Transverse colon (tissue), 4 donors: ENCODE measurements at regions of chr1 and their contacts with region 1.

Region 1: GRCh38 chr1:234610348-234611152 is 572 bp upstream of the IRF2BP2 start:
- DNase-seq: peak; percentile 96
- H3K4me3 ChIP-seq: peak overlapping the region; percentile 33 to 71 (median 47)
- H3K27ac ChIP-seq: peak overlapping the region; percentile 97 to 100 (median 100)
- H3K4me1 ChIP-seq: peaks cover 29 to 40% (median 34%) of the 10 kb centered on the region in 4 donors
- H3K27me3 ChIP-seq: no peaks in the 10 kb centered on the region
- CTCF ChIP-seq: peak in 2 of 5 experiments; percentile 2 to 13
- EP300 ChIP-seq: peak; percentile 59
- POLR2A ChIP-seq: peak; percentile 89

Region 2: GRCh38 chr1:234499119-234499942 is 111.2 kb before region 1 on chr1:
- in situ Hi-C with region 1: no loop called
- intact Hi-C with region 1: loop called (anchors 5 kb)
- DNase-seq: peak; percentile 93
- H3K4me3 ChIP-seq: peak overlapping the region in 1 of 4 donors; percentile 21
- H3K27ac ChIP-seq: peak overlapping the region; percentile 84 to 87 (median 86)
- H3K4me1 ChIP-seq: peaks cover 8 to 25% (median 18%) of the 10 kb centered on the region in 4 donors
- H3K27me3 ChIP-seq: no peaks in the 10 kb centered on the region
- CTCF ChIP-seq: peak; percentile 90 to 97 (median 92)
- EP300 ChIP-seq: no peak
- POLR2A ChIP-seq: peak; percentile 19

Region 3: DNA sequence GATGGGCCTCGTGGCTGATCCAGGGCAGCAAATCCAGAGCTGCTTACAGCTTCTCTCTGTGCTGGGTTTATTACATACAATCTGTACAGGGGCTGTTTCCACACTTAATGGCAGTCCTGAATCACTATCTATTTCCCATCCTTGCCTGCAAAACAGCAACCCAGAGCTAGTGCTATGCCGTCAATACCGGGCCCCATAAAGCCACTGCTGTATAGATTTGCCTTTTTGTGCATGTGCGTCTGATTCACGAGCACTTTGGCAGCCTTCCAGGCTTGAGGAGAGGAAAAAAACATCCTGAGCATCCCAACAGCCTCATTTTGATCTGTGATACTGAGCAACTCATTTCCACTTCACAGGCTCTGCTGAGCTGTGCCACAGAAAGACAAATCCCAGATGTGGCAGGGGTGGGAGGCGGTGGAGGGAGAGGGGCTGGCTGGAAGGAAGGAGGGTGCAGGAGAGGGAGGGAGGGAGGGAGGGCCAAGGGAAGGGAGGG is 66.4 kb before region 1 on chr1:
- in situ Hi-C with region 1: no loop called
- intact Hi-C with region 1: no loop called
- DNase-seq: peak; percentile 76
- H3K4me3 ChIP-seq: no peak overlapping the region
- H3K27ac ChIP-seq: peak overlapping the region; percentile 72 to 93 (median 83)
- H3K4me1 ChIP-seq: peaks cover 30 to 42% (median 35%) of the 10 kb centered on the region in 4 donors
- H3K27me3 ChIP-seq: no peaks in the 10 kb centered on the region
- CTCF ChIP-seq: no peak
- EP300 ChIP-seq: peak; percentile 71
- POLR2A ChIP-seq: no peak

Region 4: GRCh38 chr1:234683861-234684632 is 73.5 kb after region 1 on chr1:
- in situ Hi-C with region 1: no loop called
- intact Hi-C with region 1: loop called (anchors 10 kb)
- DNase-seq: peak; percentile 60
- H3K4me3 ChIP-seq: no peak overlapping the region
- H3K27ac ChIP-seq: peak overlapping the region; percentile 32 to 60 (median 58)
- H3K4me1 ChIP-seq: peaks cover 0 to 9% (median 5%) of the 10 kb centered on the region in 4 donors
- H3K27me3 ChIP-seq: no peaks in the 10 kb centered on the region
- CTCF ChIP-seq: no peak
- EP300 ChIP-seq: no peak
- POLR2A ChIP-seq: no peak

Region 5: GRCh38 chr1:234722904-234723720 is 112.6 kb after region 1 on chr1:
- in situ Hi-C with region 1: loop called in 3 of 4 experiments (anchors 5 to 10 kb)
- intact Hi-C with region 1: loop called (anchors 2 kb)
- DNase-seq: peak; percentile 73
- H3K4me3 ChIP-seq: peak overlapping the region in 1 of 4 donors; percentile 14
- H3K27ac ChIP-seq: peak overlapping the region; percentile 97 to 99 (median 98)
- H3K4me1 ChIP-seq: peaks cover 73 to 93% (median 77%) of the 10 kb centered on the region in 4 donors
- H3K27me3 ChIP-seq: no peaks in the 10 kb centered on the region
- CTCF ChIP-seq: no peak
- EP300 ChIP-seq: no peak
- POLR2A ChIP-seq: no peak

Region 6: GRCh38 chr1:234851450-234852438 is 241.2 kb after region 1 on chr1:
- in situ Hi-C with region 1: loop called in 2 of 4 experiments (anchors 25 kb)
- intact Hi-C with region 1: no loop called
- DNase-seq: no peak
- H3K4me3 ChIP-seq: no peak overlapping the region
- H3K27ac ChIP-seq: peak overlapping the region in 2 of 4 donors; percentile 49 to 71
- H3K4me1 ChIP-seq: peaks cover 0 to 34% (median 18%) of the 10 kb centered on the region in 4 donors
- H3K27me3 ChIP-seq: no peaks in the 10 kb centered on the region
- CTCF ChIP-seq: no peak
- EP300 ChIP-seq: no peak
- POLR2A ChIP-seq: no peak

Region 7: DNA sequence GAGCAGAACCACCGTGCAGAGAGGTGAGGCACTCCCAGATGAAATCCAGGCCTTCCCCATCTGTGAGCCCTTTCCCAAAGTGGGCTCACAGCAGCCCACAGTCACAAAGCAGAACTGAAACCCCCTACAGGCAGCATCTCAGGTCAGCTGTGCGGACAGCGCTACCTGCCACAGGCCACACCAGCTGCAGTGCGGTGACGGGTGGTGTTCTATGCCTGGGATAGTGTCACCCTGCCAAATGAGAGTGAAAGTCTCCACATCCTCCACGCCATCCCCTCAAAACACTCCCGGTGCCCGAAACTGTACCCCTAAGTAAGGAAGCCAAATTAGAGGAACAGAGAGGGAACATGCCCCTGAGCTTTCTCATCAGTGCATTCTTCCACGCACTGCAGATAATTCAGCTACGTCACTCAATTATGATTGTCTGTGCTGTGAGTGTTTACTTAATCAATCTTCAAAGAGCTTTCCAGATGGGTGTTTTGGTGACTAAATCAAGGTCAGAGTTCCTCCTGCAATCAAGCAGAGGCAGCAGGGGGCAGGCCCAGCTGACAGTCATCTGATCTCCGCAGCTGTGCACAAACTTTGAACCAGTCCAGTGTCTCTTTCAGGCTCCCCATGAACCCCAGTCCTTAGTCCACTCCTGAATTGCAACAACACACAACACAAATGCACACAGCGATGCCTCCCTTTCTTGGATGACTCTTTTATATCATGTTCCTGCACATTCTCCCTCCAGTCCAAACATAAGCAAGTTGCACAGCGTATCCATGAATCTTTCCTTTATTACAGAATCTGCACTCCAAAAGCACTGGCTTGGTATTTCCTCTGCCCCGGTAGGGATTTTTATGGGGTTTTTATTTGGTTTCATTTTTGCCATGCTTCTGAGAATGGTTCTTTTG is 368.1 kb after region 1 on chr1:
- in situ Hi-C with region 1: loop called in 3 of 4 experiments (anchors 5 to 10 kb)
- intact Hi-C with region 1: no loop called
- DNase-seq: peak; percentile 79
- H3K4me3 ChIP-seq: peak overlapping the region in 1 of 4 donors; percentile 17
- H3K27ac ChIP-seq: peak overlapping the region; percentile 88 to 91 (median 88)
- H3K4me1 ChIP-seq: peaks cover 59 to 80% (median 66%) of the 10 kb centered on the region in 4 donors
- H3K27me3 ChIP-seq: no peaks in the 10 kb centered on the region
- CTCF ChIP-seq: peak in 3 of 5 experiments; percentile 5 to 15 (median 15)
- EP300 ChIP-seq: peak; percentile 31
- POLR2A ChIP-seq: no peak

Region 8: DNA sequence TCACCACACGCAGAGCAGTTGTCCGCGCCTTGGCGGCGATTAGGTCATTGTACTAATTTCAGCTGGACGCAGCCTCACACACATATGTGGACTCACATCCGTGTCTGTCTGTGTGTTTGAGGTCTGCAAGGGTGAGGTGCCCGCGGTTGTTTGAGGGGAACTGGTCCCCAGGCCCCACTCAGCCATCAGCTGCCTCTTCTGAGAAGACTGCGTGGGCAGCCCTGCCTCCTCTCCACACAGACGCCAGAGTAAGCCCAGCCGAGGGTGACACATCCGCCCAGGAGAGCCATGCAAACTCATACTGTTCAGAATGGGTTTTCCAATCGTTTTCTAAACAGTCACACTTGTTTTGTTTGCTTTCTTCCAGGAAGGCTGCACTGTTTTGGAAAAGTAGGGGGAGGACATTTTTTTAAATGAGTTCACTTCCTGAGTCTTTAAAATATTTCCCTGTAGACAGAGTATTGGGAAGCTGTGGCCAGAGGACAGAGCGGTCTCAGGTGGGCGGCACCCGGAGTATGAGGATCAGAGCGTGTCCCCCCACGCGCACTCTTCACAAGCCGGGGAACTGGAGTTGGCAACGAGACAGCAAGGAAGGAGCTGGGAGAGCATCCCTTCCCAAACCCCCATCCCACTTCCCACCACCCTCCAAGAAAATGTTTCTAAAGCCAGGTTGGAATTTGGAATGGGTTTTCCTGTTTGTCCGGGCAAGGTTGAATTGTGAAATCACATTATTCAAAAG is 464.8 kb after region 1 on chr1:
- in situ Hi-C with region 1: loop called in 1 of 4 experiments (anchors 5 kb)
- intact Hi-C with region 1: loop called (anchors 5 kb)
- DNase-seq: peak; percentile 58
- H3K4me3 ChIP-seq: no peak overlapping the region
- H3K27ac ChIP-seq: peak overlapping the region; percentile 86 to 91 (median 90)
- H3K4me1 ChIP-seq: peaks cover 47 to 61% (median 49%) of the 10 kb centered on the region in 4 donors
- H3K27me3 ChIP-seq: no peaks in the 10 kb centered on the region
- CTCF ChIP-seq: no peak
- EP300 ChIP-seq: peak; percentile 3
- POLR2A ChIP-seq: no peak